ENCODE measurements at regions of chr3 and their contacts with region 1.

Region 1: GRCh38 chr3:48439820-48440589 is at the starts of genes CCDC51 and TMA7:
- DNase-seq: peak; percentile 95 to 97
- ATAC-seq: peak; percentile 93 to 97
- H3K4me3 ChIP-seq: peak within 1 kb of the TSS; percentile 59
- H3K27ac ChIP-seq: peak within 1 kb of the TSS; percentile 86 to 96
- H3K4me1 ChIP-seq: peaks cover 16% of the 10 kb centered on the region
- CTCF ChIP-seq: no peak
- EP300 ChIP-seq: no peak
- POLR2A ChIP-seq: peak; percentile 52
- RAD21 ChIP-seq: no peak
- polyA plus RNA-seq, gene CCDC51: 19.8 and 22.9 TPM in 2 replicates
- polyA plus RNA-seq, gene TMA7: 139 and 303 TPM in 2 replicates

Region 2: DNA sequence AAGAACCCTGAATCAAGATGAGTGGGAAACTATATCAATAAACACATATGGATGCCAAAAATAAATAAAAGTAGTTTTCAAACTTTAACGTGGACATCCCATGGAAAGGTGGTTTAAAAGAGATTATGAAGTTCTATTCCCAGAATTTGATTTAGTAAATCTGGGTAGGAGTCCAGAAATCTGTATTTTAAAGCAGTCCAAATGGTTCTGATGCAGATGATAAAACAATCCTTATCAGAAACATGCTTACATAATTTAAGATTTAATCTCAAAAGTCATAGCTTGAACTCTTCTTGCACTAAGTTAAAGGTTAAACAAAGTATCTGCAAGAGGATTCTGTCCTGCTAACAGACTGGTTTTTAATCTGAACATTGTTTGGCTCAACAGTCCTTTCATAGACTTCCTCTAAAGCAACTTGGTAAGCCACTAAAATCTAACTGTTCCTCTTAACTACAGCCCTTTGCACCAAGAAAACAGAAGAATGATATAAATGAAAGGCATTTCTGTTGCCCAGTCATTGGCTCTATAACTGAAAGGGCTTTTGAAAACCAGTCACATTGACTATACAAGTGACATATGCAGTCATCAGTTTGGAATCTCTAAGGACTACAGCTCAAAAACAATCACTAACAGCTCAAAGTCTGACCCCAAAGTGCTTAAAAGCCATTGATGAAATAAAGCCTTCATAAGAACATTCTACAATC is 400.4 kb before region 1 on chr3:
- CTCF ChIA-PET with region 1: no interaction called
- POLR2A ChIA-PET with region 1: no interaction called
- DNase-seq: peak; percentile 9 to 48
- ATAC-seq: peak; percentile 62 to 84; a peak in 5 of 6 replicates
- H3K4me3 ChIP-seq: no peak overlapping the region
- H3K27ac ChIP-seq: peak overlapping the region; percentile 10 to 76; a peak in 5 of 6 replicates
- H3K4me1 ChIP-seq: peaks cover 27% of the 10 kb centered on the region
- CTCF ChIP-seq: no peak
- EP300 ChIP-seq: no peak
- POLR2A ChIP-seq: no peak
- RAD21 ChIP-seq: no peak

Region 3: DNA sequence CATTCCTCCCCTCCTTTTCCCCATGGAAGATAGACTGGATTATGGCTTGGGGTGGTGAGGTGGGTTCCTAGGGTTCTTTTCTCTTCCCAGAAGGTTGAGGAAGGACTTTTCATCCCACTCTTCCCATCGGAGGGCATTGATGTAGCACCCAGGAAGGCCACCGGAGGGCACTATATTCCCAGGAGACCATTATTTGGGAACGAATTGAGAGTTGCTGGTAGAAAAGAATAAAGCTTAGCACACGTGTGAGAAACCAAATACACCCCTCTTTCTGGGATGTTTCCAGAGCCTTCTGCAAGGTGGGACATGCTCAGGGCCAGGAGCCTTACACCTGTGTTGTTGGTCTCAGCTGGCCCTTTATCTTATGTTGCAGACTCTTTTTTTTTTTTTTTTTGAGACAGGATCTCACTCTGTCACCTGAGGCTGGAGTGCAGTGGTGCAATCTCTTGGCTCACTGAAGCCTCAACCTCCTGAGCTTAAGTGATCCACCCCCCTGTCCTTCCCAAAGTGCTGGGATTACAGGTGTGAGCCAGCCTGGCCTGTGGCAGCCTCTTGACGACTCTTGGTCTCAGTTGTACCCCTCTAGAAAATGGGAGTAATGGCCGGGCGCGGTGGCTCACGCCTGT is 245.4 kb before region 1 on chr3:
- CTCF ChIA-PET with region 1: interaction called, 28 read pairs
- POLR2A ChIA-PET with region 1: no interaction called
- DNase-seq: peak; percentile 56 to 72
- ATAC-seq: peak; percentile 77 to 88; a peak in 5 of 6 replicates
- H3K4me3 ChIP-seq: no peak overlapping the region
- H3K27ac ChIP-seq: no peak overlapping the region
- H3K4me1 ChIP-seq: no peaks in the 10 kb centered on the region
- CTCF ChIP-seq: peak; percentile 72
- EP300 ChIP-seq: no peak
- POLR2A ChIP-seq: no peak
- RAD21 ChIP-seq: peak; percentile 64 to 75

Region 4: GRCh38 chr3:48256557-48256956 is 183.4 kb before region 1 on chr3:
- CTCF ChIA-PET with region 1: interaction called, 11 read pairs
- POLR2A ChIA-PET with region 1: no interaction called
- DNase-seq: no peak
- ATAC-seq: no peak
- H3K4me3 ChIP-seq: no peak overlapping the region
- H3K27ac ChIP-seq: no peak overlapping the region
- H3K4me1 ChIP-seq: no peaks in the 10 kb centered on the region
- CTCF ChIP-seq: no peak
- EP300 ChIP-seq: no peak
- POLR2A ChIP-seq: no peak
- RAD21 ChIP-seq: no peak

Region 5: GRCh38 chr3:48289659-48290058 is 150.3 kb before region 1 on chr3:
- CTCF ChIA-PET with region 1: interaction called, 10 read pairs
- POLR2A ChIA-PET with region 1: interaction called, 3 read pairs
- DNase-seq: no peak
- ATAC-seq: no peak
- H3K4me3 ChIP-seq: no peak overlapping the region
- H3K27ac ChIP-seq: no peak overlapping the region
- H3K4me1 ChIP-seq: no peaks in the 10 kb centered on the region
- CTCF ChIP-seq: no peak
- EP300 ChIP-seq: no peak
- POLR2A ChIP-seq: no peak
- RAD21 ChIP-seq: no peak

Region 6: GRCh38 chr3:48459773-48460516 is 19.9 kb after region 1 on chr3:
- CTCF ChIA-PET with region 1: interaction called, 18 read pairs
- POLR2A ChIA-PET with region 1: interaction called, 5 read pairs
- DNase-seq: no peak
- ATAC-seq: no peak
- H3K4me3 ChIP-seq: no peak overlapping the region
- H3K27ac ChIP-seq: no peak overlapping the region
- H3K4me1 ChIP-seq: peaks cover 2% of the 10 kb centered on the region
- CTCF ChIP-seq: no peak
- EP300 ChIP-seq: no peak
- POLR2A ChIP-seq: no peak
- RAD21 ChIP-seq: no peak

Region 7: DNA sequence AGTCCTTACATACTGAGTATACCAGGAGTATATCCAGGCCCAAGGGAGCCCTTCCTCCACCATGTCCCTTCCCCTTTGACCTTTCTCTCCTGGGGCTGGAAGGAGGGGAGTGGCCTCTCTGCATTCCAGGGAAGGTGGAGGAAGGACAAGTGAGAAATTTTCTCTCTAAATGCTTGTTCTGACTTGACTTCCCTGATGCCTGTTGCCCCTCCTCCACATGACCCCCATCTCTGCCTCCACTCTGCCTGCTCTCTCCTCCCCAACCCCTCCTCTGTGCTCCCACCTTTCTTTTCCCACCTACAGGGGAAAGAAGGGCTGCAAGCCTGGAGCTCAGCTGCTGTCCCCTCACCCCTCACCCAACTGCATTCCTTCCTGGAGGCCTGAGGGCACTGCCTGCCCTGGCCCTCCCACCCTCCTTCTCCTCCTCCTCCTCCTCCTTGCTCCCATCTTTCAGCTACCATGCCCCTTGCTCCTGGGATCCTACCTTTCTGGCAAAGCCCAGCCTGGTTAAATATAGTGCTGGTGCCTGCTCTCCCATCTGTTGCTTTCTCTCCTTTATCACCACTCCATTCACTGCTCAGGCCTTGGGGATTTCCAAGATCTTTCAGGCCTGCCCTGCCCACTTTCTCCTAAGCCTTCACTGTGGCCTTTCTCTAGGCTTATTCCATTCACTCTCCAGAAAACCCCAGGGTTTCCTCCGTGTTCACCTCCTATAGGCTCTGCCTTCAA is 1021.6 kb after region 1 on chr3:
- CTCF ChIA-PET with region 1: no interaction called
- POLR2A ChIA-PET with region 1: interaction called, 10 read pairs
- DNase-seq: peak in 1 of 2 experiments; percentile 37
- ATAC-seq: peak; percentile 35 to 73
- H3K4me3 ChIP-seq: no peak overlapping the region
- H3K27ac ChIP-seq: peak overlapping the region; percentile 63 to 83
- H3K4me1 ChIP-seq: peaks cover 42% of the 10 kb centered on the region
- CTCF ChIP-seq: no peak
- EP300 ChIP-seq: no peak
- POLR2A ChIP-seq: no peak
- RAD21 ChIP-seq: no peak

Measured in A549 (cell line).